ENCODE measurements at regions of chr13 and their contacts with region 1.

Region 1: GRCh38 chr13:110412132-110412914 is 105.2 kb downstream of the COL4A2 start:
- DNase-seq: peak; percentile 78
- H3K4me3 ChIP-seq: no peak overlapping the region
- H3K27ac ChIP-seq: peak overlapping the region; percentile 49
- H3K4me1 ChIP-seq: no peaks in the 10 kb centered on the region
- H3K27me3 ChIP-seq: no peaks in the 10 kb centered on the region
- CTCF ChIP-seq: peak; percentile 87

Region 2: GRCh38 chr13:108961542-108962125 is 1450.7 kb before region 1 on chr13:
- intact Hi-C with region 1: loop called (anchors 10 kb)
- DNase-seq: no peak
- H3K4me3 ChIP-seq: no peak overlapping the region
- H3K27ac ChIP-seq: no peak overlapping the region
- H3K4me1 ChIP-seq: no peaks in the 10 kb centered on the region
- H3K27me3 ChIP-seq: no peaks in the 10 kb centered on the region
- CTCF ChIP-seq: peak; percentile 85

Region 3: DNA sequence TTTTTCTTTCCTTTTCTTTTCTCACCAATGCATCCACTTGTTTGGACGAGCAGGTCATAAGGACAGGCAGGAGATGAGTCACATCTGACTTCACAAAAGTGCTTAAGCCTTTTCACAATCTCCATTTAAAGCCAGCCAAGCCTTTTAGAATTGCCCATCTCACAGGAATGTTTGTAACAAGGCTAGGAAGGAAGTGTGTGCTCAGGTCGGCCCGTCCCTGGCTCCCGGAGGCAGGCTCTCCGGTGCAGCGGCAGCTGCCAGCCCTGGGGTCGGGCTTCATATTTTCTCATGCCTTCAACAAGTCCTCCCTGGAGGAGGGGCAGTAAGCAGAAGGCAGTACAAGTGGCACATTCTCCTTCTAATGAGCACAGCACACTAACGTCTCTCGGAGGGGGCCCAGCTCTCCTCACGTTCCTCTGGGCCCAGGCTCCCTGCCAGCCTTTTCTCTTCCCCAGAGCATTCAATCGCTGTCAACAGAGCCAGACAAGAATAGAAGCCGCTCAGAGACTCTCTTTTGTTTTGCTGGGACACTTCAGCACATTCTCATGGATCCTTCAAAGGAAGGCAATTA is 285.8 kb before region 1 on chr13:
- intact Hi-C with region 1: no loop called
- DNase-seq: no peak
- H3K4me3 ChIP-seq: no peak overlapping the region
- H3K27ac ChIP-seq: peak overlapping the region; percentile 47
- H3K4me1 ChIP-seq: no peaks in the 10 kb centered on the region
- H3K27me3 ChIP-seq: no peaks in the 10 kb centered on the region
- CTCF ChIP-seq: no peak

Region 4: GRCh38 chr13:110225609-110226562 is 186.4 kb before region 1 on chr13:
- intact Hi-C with region 1: loop called (anchors 2 kb)
- DNase-seq: no peak
- H3K4me3 ChIP-seq: no peak overlapping the region
- H3K27ac ChIP-seq: no peak overlapping the region
- H3K4me1 ChIP-seq: no peaks in the 10 kb centered on the region
- H3K27me3 ChIP-seq: no peaks in the 10 kb centered on the region
- CTCF ChIP-seq: no peak